ENCODE measurements at regions of chr2 and their contacts with region 1.

Region 1: GRCh38 chr2:42105330-42106256 is 57.8 kb downstream of the PKDCC start:
- DNase-seq: peak; percentile 88
- ATAC-seq: peak; percentile 74
- H3K4me3 ChIP-seq: no peak overlapping the region
- H3K27ac ChIP-seq: peak overlapping the region; percentile 76
- H3K4me1 ChIP-seq: peaks cover 92% of the 10 kb centered on the region
- H3K27me3 ChIP-seq: no peaks in the 10 kb centered on the region
- CTCF ChIP-seq: no peak
- EP300 ChIP-seq: peak in 1 of 2 experiments; percentile 97; a peak in 2 of 4 replicates
- POLR2A ChIP-seq: peak in 1 of 2 experiments; percentile 25; a peak in 1 of 4 replicates
- RAD21 ChIP-seq: no peak

Region 2: GRCh38 chr2:42117923-42118753 is 12.5 kb after region 1 on chr2:
- CTCF ChIA-PET with region 1: no interaction called
- POLR2A ChIA-PET with region 1: interaction called, 57 read pairs
- in situ Hi-C with region 1: no loop called
- intact Hi-C with region 1: loop called (anchors 1 kb)
- DNase-seq: peak; percentile 91
- ATAC-seq: peak; percentile 70
- H3K4me3 ChIP-seq: peak overlapping the region in 2 of 3 experiments; percentile 35 to 37; a peak in 2 of 6 replicates
- H3K27ac ChIP-seq: peak overlapping the region; percentile 71
- H3K4me1 ChIP-seq: peaks cover 74% of the 10 kb centered on the region
- H3K27me3 ChIP-seq: no peaks in the 10 kb centered on the region
- CTCF ChIP-seq: no peak
- EP300 ChIP-seq: peak in 1 of 2 experiments; percentile 95; a peak in 2 of 4 replicates
- POLR2A ChIP-seq: 0 out of 4 replicates have a peak, but pooled peaks of 1 of the 2 experiments have one; percentile 17
- RAD21 ChIP-seq: no peak

Region 3: GRCh38 chr2:42127425-42128424 is 22.1 kb after region 1 on chr2:
- CTCF ChIA-PET with region 1: no interaction called
- POLR2A ChIA-PET with region 1: interaction called, 110 read pairs
- in situ Hi-C with region 1: no loop called
- intact Hi-C with region 1: no loop called
- DNase-seq: peak; percentile 97
- ATAC-seq: peak; percentile 89
- H3K4me3 ChIP-seq: peak overlapping the region; percentile 22 to 61 (median 57); a peak in 5 of 6 replicates
- H3K27ac ChIP-seq: peak overlapping the region; percentile 84
- H3K4me1 ChIP-seq: peaks cover 100% of the 10 kb centered on the region
- H3K27me3 ChIP-seq: no peaks in the 10 kb centered on the region
- CTCF ChIP-seq: 0 out of 2 replicates have a peak, but pooled peaks have one; percentile 8
- EP300 ChIP-seq: peak; percentile 18 to 96; a peak in 2 of 4 replicates
- POLR2A ChIP-seq: peak; percentile 23 to 45; a peak in 3 of 4 replicates
- RAD21 ChIP-seq: 0 out of 2 replicates have a peak, but pooled peaks have one; percentile 33

Region 4: GRCh38 chr2:42156721-42157120 is 51.1 kb after region 1 on chr2:
- CTCF ChIA-PET with region 1: no interaction called
- POLR2A ChIA-PET with region 1: no interaction called
- in situ Hi-C with region 1: no loop called
- intact Hi-C with region 1: no loop called
- DNase-seq: no peak
- ATAC-seq: no peak
- H3K4me3 ChIP-seq: no peak overlapping the region
- H3K27ac ChIP-seq: no peak overlapping the region
- H3K4me1 ChIP-seq: peaks cover 25% of the 10 kb centered on the region
- H3K27me3 ChIP-seq: no peaks in the 10 kb centered on the region
- CTCF ChIP-seq: no peak
- EP300 ChIP-seq: no peak
- POLR2A ChIP-seq: no peak
- RAD21 ChIP-seq: no peak

Region 5: DNA sequence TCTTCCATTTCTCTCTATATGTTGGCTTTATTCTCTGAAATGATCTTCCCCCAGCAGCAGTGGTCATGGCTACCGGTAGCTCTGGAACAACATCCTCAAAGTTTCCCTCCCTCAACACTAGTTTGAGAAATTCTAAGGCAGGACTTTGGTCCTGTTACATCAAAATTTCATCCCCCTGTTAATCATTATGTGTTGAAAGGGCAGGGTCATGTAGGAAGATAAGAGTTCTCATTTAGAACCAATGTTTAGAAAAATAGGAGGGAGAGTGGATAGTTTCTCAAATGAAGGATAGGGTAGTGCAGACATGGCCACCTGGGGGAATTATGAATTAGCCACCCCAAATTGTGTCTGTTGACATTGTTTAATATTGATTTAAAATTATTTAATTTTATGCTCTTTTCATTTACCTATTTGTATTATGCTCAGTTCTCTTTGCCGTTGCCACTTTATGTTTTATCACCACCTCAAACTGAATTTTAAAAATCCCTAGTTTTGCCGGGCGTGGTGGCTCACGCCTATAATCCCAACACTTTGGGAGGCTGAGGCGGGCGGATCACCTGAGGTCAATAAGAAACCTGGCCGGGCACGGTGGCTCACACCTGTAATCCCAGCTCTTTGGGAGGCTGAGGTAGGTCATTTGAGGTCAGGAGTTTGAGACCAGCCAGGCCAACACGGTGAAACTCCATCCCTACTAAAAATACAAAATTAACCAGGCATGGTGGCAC is 85.9 kb after region 1 on chr2:
- CTCF ChIA-PET with region 1: no interaction called
- POLR2A ChIA-PET with region 1: interaction called, 18 read pairs
- in situ Hi-C with region 1: no loop called
- intact Hi-C with region 1: no loop called
- DNase-seq: peak; percentile 99
- ATAC-seq: peak; percentile 87
- H3K4me3 ChIP-seq: peak overlapping the region in 2 of 3 experiments; percentile 25 to 43; a peak in 2 of 6 replicates
- H3K27ac ChIP-seq: peak overlapping the region; percentile 98
- H3K4me1 ChIP-seq: peaks cover 100% of the 10 kb centered on the region
- H3K27me3 ChIP-seq: no peaks in the 10 kb centered on the region
- CTCF ChIP-seq: no peak
- EP300 ChIP-seq: peak; percentile 80 to 99; a peak in 3 of 4 replicates
- POLR2A ChIP-seq: peak; percentile 59 to 66
- RAD21 ChIP-seq: peak; percentile 26; the same call in 1 of the 2 replicates